HepG2 (cell line): ENCODE measurements at regions of chr7 and their contacts with region 1.

Region 1: DNA sequence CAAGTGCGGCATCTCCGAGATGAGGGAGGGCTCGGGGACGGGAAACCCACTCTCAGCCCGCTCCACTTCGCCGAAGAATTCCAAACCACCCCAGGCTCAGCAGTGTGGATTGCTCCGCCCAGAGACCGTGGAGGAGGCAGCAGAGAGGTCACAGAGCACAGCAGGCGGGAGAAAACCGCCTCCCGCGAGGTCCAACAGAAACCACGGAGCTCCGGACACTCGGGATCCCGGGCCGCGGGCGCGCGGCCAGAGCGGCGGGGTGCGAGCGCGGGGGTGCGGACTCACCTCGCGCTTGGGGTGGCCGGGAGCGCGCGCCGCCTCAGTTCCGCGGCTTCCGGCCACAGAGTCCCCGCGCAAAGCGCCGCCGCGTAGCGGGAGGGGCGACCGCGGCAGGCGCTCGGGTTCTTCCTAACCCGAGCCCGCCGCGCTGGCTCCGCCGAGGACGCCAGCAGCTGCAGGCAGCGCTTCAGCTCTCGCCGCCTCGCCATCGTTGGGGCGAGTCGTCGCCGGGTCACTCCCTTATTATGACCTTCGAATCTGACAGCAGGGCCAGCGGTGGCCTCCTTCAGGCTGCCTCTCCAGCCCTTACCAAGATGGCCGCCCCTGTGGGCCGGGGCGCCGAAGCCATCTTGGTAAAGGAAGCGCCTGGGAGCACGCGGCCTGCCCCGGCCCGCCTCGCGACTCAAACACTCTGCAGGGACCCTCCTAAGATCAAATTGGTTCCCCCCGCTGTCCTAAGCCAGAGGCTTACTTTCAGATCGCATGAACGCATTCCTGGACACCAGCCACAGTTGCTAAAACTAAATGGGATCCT is at the start of gene NAPEPLD:
- DNase-seq: peak; percentile 72
- ATAC-seq: peak; percentile 91
- H3K4me3 ChIP-seq: peak within 1 kb of the TSS; percentile 64 to 81 (median 78)
- H3K27ac ChIP-seq: peak within 1 kb of the TSS; percentile 90
- H3K4me1 ChIP-seq: peaks cover 77% of the 10 kb centered on the region
- H3K27me3 ChIP-seq: no peaks in the 10 kb centered on the region
- CTCF ChIP-seq: no peak
- EP300 ChIP-seq: no peak
- POLR2A ChIP-seq: peak; percentile 52 to 78; a peak in 3 of 4 replicates
- RAD21 ChIP-seq: no peak
- total RNA-seq, gene NAPEPLD: 5.6 and 6.8 TPM in 2 replicates

Region 2: DNA sequence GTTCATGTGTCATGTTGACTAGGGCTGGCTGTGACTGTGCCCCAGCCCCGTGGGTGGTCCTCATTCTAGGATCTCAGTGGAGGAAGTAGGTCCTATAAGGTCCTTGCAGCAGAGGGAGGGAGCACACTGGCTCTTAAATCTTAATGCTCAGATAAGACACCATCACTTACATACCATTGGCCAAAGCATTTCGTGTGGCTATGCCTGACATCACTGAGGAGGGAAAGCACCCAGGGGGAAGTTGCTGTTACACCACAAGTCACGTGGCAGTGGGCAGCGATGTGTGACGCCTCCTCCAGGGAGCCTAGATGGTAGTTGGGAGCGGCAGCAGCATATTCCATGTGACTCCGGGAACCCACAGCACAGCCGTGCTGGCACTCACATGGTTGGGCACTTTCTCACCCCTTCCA is 1087.2 kb before region 1 on chr7:
- CTCF ChIA-PET with region 1: no interaction called
- POLR2A ChIA-PET with region 1: no interaction called
- in situ Hi-C with region 1: no loop called
- intact Hi-C with region 1: no loop called
- DNase-seq: no peak
- ATAC-seq: no peak
- H3K4me3 ChIP-seq: no peak overlapping the region
- H3K27ac ChIP-seq: no peak overlapping the region
- H3K4me1 ChIP-seq: peaks cover 10% of the 10 kb centered on the region; the same call in 1 of the 2 replicates
- H3K27me3 ChIP-seq: no peaks in the 10 kb centered on the region
- CTCF ChIP-seq: no peak
- EP300 ChIP-seq: no peak
- POLR2A ChIP-seq: no peak
- RAD21 ChIP-seq: no peak

Region 3: GRCh38 chr7:102943423-102944169 is 205.6 kb before region 1 on chr7:
- CTCF ChIA-PET with region 1: no interaction called
- POLR2A ChIA-PET with region 1: no interaction called
- in situ Hi-C with region 1: no loop called
- intact Hi-C with region 1: no loop called
- DNase-seq: no peak
- ATAC-seq: no peak
- H3K4me3 ChIP-seq: no peak overlapping the region
- H3K27ac ChIP-seq: no peak overlapping the region
- H3K4me1 ChIP-seq: no peaks in the 10 kb centered on the region
- H3K27me3 ChIP-seq: peaks cover 0 to 1% of the 10 kb centered on the region in 2 experiments; a peak in 1 of 5 replicates
- CTCF ChIP-seq: no peak
- EP300 ChIP-seq: no peak
- POLR2A ChIP-seq: no peak
- RAD21 ChIP-seq: no peak

Region 4: GRCh38 chr7:103106005-103106702 is 43.0 kb before region 1 on chr7:
- CTCF ChIA-PET with region 1: no interaction called
- POLR2A ChIA-PET with region 1: interaction called, 6 read pairs
- in situ Hi-C with region 1: no loop called
- intact Hi-C with region 1: loop called (anchors 5 kb)
- DNase-seq: peak; percentile 88
- ATAC-seq: peak; percentile 98
- H3K4me3 ChIP-seq: peak overlapping the region; percentile 10 to 58 (median 16); a peak in 5 of 6 replicates
- H3K27ac ChIP-seq: peak overlapping the region; percentile 76
- H3K4me1 ChIP-seq: peaks cover 26% of the 10 kb centered on the region
- H3K27me3 ChIP-seq: no peaks in the 10 kb centered on the region
- CTCF ChIP-seq: no peak
- EP300 ChIP-seq: peak in 1 of 2 experiments; percentile 48; a peak in 1 of 4 replicates
- POLR2A ChIP-seq: no peak
- RAD21 ChIP-seq: no peak; the same call in 1 of the 2 replicates